Activated CD8-positive, alpha-beta T cell treated with anti-CD3 and anti-CD28 coated beads, Interleukin-2, amount 10 ng/mL, durations not matched to agents 7 days and 5 days (primary cell): ENCODE measurements at regions of chr15 and their contacts with region 1.

Region 1: DNA sequence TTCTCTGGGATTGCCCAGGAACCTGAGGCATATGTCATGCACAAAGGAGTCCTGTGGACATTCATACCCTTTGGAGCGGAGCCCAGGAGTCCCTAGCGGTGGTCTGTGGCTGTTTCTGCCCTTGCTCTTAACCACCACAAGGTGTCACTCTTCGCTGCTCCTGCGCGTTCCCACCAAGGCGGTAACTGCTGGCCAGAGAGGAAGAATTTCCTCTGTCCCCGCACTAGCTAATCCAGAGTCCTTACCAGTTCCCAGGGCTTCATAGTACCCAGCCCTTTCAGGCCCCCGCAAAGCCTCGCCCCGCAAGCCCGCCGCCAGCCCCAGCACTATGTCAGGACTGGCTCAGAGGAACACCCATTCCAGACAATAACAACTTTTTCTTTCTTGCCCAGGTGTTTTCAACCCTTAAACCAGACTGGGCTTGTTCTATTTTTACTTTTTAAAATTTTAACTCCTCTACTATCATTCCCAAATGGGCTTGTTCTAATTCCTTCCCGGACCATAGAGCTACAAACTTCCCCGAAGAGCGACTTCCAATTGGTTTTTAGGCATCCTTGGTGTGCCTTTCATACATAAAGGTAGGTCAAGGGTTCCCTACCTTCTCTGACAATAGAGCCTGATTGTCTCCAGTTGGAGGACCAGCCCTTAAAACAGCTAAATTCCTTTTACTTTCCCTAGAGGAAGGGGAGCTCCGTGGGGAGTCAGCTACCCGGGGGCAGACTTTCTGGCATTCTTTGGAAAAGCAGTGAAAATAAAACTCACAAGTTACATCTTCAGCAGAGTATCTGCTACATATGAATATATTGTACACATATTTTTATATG is 31.8 kb upstream of the ZNF774 start:
- DNase-seq: peak; percentile 80
- ATAC-seq: peak; percentile 99
- H3K4me3 Mint-ChIP-seq: peak overlapping the region; percentile 9
- H3K27ac Mint-ChIP-seq: no peak overlapping the region
- H3K4me1 Mint-ChIP-seq: peaks cover 7% of the 10 kb centered on the region
- H3K27me3 Mint-ChIP-seq: peaks cover 2% of the 10 kb centered on the region

Region 2: DNA sequence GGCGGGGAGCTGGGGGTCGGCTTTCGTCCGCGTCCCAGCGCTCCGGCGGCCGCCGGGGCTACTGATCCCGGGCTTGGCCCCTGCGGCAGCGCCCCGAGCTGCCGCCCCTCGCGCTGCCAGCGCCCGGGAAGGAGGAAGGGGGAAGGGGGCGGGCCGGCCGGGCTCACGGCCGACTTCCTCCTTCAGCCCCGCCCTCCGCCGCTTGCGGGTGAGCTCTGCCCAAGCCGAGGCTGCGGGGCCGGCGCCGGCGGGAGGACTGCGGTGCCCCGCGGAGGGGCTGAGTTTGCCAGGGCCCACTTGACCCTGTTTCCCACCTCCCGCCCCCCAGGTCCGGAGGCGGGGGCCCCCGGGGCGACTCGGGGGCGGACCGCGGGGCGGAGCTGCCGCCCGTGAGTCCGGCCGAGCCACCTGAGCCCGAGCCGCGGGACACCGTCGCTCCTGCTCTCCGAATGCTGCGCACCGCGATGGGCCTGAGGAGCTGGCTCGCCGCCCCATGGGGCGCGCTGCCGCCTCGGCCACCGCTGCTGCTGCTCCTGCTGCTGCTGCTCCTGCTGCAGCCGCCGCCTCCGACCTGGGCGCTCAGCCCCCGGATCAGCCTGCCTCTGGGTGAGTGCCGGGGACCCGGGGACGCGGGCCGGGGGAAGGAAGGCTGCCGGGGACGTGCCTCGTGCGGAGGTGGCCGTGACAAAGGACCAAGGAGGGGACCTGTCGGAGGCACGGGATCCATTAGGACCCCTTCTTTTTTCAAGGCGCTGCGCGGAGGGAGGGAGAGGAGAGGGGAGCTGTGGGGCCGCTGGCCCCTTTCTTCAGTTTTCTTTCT is 118.9 kb before region 1 on chr15 and contains the start of gene SEMA4B:
- CTCF ChIA-PET with region 1: no interaction called
- POLR2A ChIA-PET with region 1: no interaction called
- DNase-seq: peak; percentile 78
- ATAC-seq: peak; percentile 93
- H3K4me3 Mint-ChIP-seq: peak within 1 kb of the TSS; percentile 80
- H3K27ac Mint-ChIP-seq: peak within 1 kb of the TSS; percentile 80
- H3K4me1 Mint-ChIP-seq: peaks cover 26% of the 10 kb centered on the region
- H3K27me3 Mint-ChIP-seq: peaks cover 4% of the 10 kb centered on the region
- total RNA-seq, gene SEMA4B: 8.6 to 11.2 TPM

Region 3: GRCh38 chr15:90306560-90306959 is 13.7 kb before region 1 on chr15:
- CTCF ChIA-PET with region 1: interaction called, 46 read pairs
- POLR2A ChIA-PET with region 1: interaction called, 4 read pairs
- DNase-seq: peak; percentile 60
- ATAC-seq: peak; percentile 84
- H3K4me3 Mint-ChIP-seq: peak overlapping the region; percentile 42
- H3K27ac Mint-ChIP-seq: peak overlapping the region; percentile 88
- H3K4me1 Mint-ChIP-seq: peaks cover 32% of the 10 kb centered on the region
- H3K27me3 Mint-ChIP-seq: peaks cover 4% of the 10 kb centered on the region

Region 4: GRCh38 chr15:90362936-90363212 is 42.6 kb after region 1 on chr15:
- CTCF ChIA-PET with region 1: interaction called, 68 read pairs
- POLR2A ChIA-PET with region 1: no interaction called
- DNase-seq: no peak
- ATAC-seq: no peak
- H3K4me3 Mint-ChIP-seq: no peak overlapping the region
- H3K27ac Mint-ChIP-seq: no peak overlapping the region
- H3K4me1 Mint-ChIP-seq: peaks cover 42% of the 10 kb centered on the region
- H3K27me3 Mint-ChIP-seq: no peaks in the 10 kb centered on the region

Region 5: GRCh38 chr15:90419738-90420406 is 99.6 kb after region 1 on chr15:
- CTCF ChIA-PET with region 1: interaction called, 15 read pairs
- POLR2A ChIA-PET with region 1: no interaction called
- DNase-seq: no peak
- ATAC-seq: peak; percentile 85
- H3K4me3 Mint-ChIP-seq: no peak overlapping the region
- H3K27ac Mint-ChIP-seq: peak overlapping the region; percentile 39
- H3K4me1 Mint-ChIP-seq: peaks cover 55% of the 10 kb centered on the region
- H3K27me3 Mint-ChIP-seq: no peaks in the 10 kb centered on the region

Region 6: GRCh38 chr15:90463381-90463780 is 143.1 kb after region 1 on chr15:
- CTCF ChIA-PET with region 1: interaction called, 42 read pairs
- POLR2A ChIA-PET with region 1: no interaction called
- DNase-seq: no peak
- ATAC-seq: no peak
- H3K4me3 Mint-ChIP-seq: no peak overlapping the region
- H3K27ac Mint-ChIP-seq: peak overlapping the region; percentile 37
- H3K4me1 Mint-ChIP-seq: peaks cover 2% of the 10 kb centered on the region
- H3K27me3 Mint-ChIP-seq: no peaks in the 10 kb centered on the region

Region 7: GRCh38 chr15:90620379-90621067 is 300.2 kb after region 1 on chr15:
- CTCF ChIA-PET with region 1: interaction called, 13 read pairs
- POLR2A ChIA-PET with region 1: no interaction called
- DNase-seq: peak; percentile 46
- ATAC-seq: peak; percentile 82
- H3K4me3 Mint-ChIP-seq: peak overlapping the region; percentile 27
- H3K27ac Mint-ChIP-seq: peak overlapping the region; percentile 85
- H3K4me1 Mint-ChIP-seq: peaks cover 22% of the 10 kb centered on the region
- H3K27me3 Mint-ChIP-seq: no peaks in the 10 kb centered on the region